ENCODE measurements at regions of chr4 and their contacts with region 1.

Region 1: DNA sequence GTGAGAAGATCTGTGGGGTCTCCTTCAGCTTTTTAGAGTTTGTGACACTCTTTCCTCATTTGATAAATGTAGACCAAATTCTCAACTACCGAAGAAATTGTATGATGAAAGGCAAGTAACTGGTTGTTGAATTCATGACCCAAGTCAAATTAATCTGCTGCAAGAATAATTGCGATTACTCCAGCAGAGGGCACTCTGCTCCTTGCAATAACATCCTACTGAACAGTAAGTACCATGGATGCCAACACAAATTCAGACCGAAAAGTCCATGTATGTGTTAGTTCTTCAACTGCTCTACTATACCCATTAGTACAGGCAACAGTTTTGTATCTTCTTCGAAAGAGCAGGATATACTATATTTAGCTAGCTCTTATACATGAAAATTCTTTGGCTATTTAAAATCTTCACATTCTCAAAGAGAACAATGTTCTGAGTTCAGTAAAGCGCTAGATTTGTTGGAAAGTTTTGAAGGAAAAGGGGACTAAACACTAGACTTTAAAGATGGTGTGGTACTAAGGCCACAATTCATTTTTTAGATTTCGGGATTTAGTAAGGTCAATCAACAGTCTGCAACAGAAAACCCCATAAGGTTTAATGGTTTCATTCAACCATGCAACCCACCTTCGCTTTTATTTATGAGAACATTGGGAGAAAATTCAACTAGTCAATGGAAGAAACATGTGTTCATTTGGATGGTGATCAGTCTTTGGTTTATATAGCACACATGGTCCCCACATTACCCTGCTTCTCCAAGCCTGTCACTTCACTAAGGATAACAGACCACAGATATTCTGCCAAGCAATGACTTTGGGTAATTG is 105.4 kb upstream of the TBC1D9 start:
- DNase-seq: peak; percentile 17
- ATAC-seq: peak; percentile 90
- H3K4me3 ChIP-seq: no peak overlapping the region
- H3K27ac ChIP-seq: no peak overlapping the region
- H3K4me1 ChIP-seq: no peaks in the 10 kb centered on the region
- H3K27me3 ChIP-seq: peaks cover 0 to 2% of the 10 kb centered on the region in 2 experiments; a peak in 1 of 4 replicates
- CTCF ChIP-seq: peak; percentile 64 to 81 (median 80)
- EP300 ChIP-seq: no peak
- POLR2A ChIP-seq: no peak
- RAD21 ChIP-seq: peak; percentile 88

Region 2: GRCh38 chr4:140884431-140885058 is 23.0 kb after region 1 on chr4:
- CTCF ChIA-PET with region 1: interaction called, 19 read pairs
- POLR2A ChIA-PET with region 1: no interaction called
- RAD21 ChIA-PET with region 1: interaction called, 5 read pairs
- SMC1A ChIA-PET with region 1: interaction called, 9 read pairs
- in situ Hi-C with region 1: no loop called
- intact Hi-C with region 1: loop called (anchors 1 kb)
- DNase-seq: peak; percentile 9
- ATAC-seq: peak; percentile 98
- H3K4me3 ChIP-seq: no peak overlapping the region
- H3K27ac ChIP-seq: no peak overlapping the region
- H3K4me1 ChIP-seq: no peaks in the 10 kb centered on the region
- H3K27me3 ChIP-seq: no peaks in the 10 kb centered on the region
- CTCF ChIP-seq: peak; percentile 77 to 82 (median 80)
- EP300 ChIP-seq: no peak
- POLR2A ChIP-seq: no peak
- RAD21 ChIP-seq: peak; percentile 93

Region 3: DNA sequence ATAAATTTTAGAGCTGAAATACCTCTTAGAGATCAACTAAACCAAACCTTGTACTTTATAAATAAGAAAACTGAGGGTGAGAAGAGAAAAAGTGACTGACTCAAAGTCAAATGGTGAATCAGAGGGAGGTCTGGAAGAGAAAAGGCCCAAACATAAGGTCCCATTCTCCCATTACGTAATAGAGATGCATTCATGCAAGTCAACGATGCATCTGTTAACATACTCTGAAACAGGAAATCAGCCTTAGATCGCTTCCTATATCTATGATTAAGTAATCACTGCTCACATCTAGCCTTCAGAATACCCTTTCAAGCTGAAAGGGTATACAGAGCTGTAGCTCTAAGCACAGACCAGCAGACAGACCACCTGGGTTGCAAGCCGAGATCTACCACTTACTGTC is 265.2 kb after region 1 on chr4:
- CTCF ChIA-PET with region 1: no interaction called
- POLR2A ChIA-PET with region 1: no interaction called
- RAD21 ChIA-PET with region 1: interaction called, 3 read pairs
- SMC1A ChIA-PET with region 1: no interaction called
- in situ Hi-C with region 1: loop called (anchors 5 kb)
- intact Hi-C with region 1: no loop called
- DNase-seq: no peak
- ATAC-seq: no peak
- H3K4me3 ChIP-seq: no peak overlapping the region
- H3K27ac ChIP-seq: no peak overlapping the region
- H3K4me1 ChIP-seq: no peaks in the 10 kb centered on the region
- H3K27me3 ChIP-seq: peaks cover 2 to 7% of the 10 kb centered on the region in 2 experiments
- CTCF ChIP-seq: no peak
- EP300 ChIP-seq: no peak
- POLR2A ChIP-seq: no peak
- RAD21 ChIP-seq: no peak

Region 4: DNA sequence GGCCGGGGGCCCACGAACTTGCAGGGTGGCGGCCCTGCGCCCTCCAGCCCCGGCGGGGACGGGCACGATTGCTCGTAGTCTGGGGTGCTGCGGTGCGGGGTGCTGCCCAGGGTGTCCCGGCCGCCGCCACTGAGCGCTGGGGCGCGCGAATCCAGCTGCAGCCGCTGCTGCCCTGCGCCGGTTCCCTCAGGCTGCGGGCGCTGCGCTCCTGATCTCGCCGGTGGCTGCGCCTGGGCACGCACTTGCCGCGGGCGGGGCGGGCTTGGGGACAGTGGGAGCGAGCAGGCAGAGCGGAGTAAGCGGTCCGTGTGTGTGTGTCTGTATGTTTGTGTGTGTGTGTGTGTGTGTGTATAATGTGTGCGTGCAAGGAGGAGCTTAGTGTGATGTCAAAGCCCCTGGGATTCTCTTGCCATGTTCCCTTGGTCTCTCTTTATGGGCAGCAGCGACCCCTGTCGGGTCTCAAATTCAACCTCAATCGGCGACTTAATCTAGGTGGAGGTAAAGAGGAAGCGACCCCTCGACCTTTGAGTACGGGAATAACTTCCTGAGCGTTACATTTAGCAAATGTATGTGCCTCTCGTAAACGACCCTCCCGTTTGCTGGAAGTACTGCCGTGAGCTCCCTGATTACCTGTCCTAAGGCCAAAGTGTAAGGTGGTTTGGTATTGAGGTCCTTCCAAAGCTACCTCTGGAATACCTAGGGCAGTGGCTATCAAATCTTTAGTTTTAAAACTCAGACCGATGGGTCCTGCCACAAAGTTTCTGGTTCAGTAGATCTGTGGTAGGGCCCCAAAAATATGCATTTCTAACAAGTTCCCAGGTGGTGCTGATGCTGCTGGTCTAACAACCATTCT is 271.8 kb after region 1 on chr4 and contains the start of gene RNF150:
- CTCF ChIA-PET with region 1: interaction called, 5 read pairs
- POLR2A ChIA-PET with region 1: no interaction called
- RAD21 ChIA-PET with region 1: interaction called, 4 read pairs
- SMC1A ChIA-PET with region 1: no interaction called
- in situ Hi-C with region 1: loop called (anchors 5 kb)
- intact Hi-C with region 1: loop called (anchors 1 kb)
- DNase-seq: peak; percentile 9
- ATAC-seq: peak; percentile 81
- H3K4me3 ChIP-seq: peak within 1 kb of the TSS; percentile 36; the same call in 1 of the 2 replicates
- H3K27ac ChIP-seq: no peak within 1 kb of the TSS
- H3K4me1 ChIP-seq: no peaks in the 10 kb centered on the region
- H3K27me3 ChIP-seq: peaks cover 6 to 15% of the 10 kb centered on the region in 2 experiments
- CTCF ChIP-seq: peak; percentile 36 to 59 (median 45); a peak in 4 of 6 replicates
- EP300 ChIP-seq: no peak
- POLR2A ChIP-seq: no peak
- RAD21 ChIP-seq: peak; percentile 59
- polyA plus RNA-seq, gene RNF150: not detected

Measured in GM12878 (cell line).